Endothelial cell of umbilical vein (primary cell): ENCODE measurements at regions of chr2 and their contacts with region 1.

Region 1: DNA sequence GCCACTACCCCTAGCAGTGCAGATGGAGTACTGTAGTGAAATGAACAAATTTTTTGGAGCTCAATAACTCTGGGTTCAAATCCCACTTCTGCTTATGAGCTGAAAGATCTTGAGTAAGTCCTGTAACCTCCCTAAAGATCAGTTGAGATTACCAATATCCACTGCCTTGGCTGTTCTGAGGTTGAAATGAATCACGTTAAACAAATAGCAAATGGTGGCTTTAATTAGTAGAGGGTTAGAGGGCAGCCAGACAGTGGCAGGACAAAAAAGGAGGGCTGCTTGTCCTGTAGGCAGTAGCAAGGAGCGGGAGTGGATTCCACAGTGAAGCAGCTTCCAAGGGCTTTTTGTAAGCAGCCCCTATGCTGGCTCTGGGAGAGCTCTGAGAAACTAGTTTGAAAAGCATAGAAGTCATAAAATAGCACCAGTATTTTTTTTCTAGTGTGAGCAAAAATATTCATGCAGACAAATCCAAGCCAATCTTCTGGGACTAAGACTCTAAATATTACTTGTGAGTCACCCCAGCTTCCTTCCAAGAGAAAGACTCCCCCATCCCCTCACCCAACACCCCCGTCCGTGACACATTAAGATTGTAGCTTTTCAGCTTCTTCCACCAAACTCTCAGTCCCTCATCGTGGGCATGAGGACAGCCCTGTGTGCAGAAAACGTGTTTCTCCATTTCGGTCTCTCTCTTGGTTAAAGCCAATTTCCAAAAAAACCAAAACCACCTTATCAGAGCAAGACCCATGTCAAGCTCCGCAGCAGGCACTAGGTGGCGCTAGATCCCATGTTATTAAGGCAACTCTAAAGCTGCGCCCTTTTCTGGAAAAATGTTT is 123.5 kb upstream of the LGALSL start:
- DNase-seq: peak; percentile 86
- H3K4me3 ChIP-seq: peak overlapping the region; percentile 15 to 34 (median 20)
- H3K27ac ChIP-seq: no peak overlapping the region
- H3K4me1 ChIP-seq: peaks cover 14% of the 10 kb centered on the region
- H3K27me3 ChIP-seq: no peaks in the 10 kb centered on the region
- CTCF ChIP-seq: peak; percentile 83 to 87
- POLR2A ChIP-seq: no peak

Region 2: GRCh38 chr2:64052468-64053241 is 277.8 kb before region 1 on chr2:
- CTCF ChIA-PET with region 1: interaction called, 388 read pairs
- POLR2A ChIA-PET with region 1: interaction called, 4 read pairs
- dilution Hi-C with region 1: no loop called
- intact Hi-C with region 1: loop called (anchors 1 kb)
- DNase-seq: peak; percentile 94
- H3K4me3 ChIP-seq: peak overlapping the region in 1 of 3 experiments; percentile 20
- H3K27ac ChIP-seq: peak overlapping the region; percentile 96
- H3K4me1 ChIP-seq: peaks cover 28% of the 10 kb centered on the region
- H3K27me3 ChIP-seq: no peaks in the 10 kb centered on the region
- CTCF ChIP-seq: no peak
- POLR2A ChIP-seq: no peak

Region 3: GRCh38 chr2:64267699-64268098 is 62.8 kb before region 1 on chr2:
- CTCF ChIA-PET with region 1: interaction called, 10 read pairs
- POLR2A ChIA-PET with region 1: no interaction called
- dilution Hi-C with region 1: no loop called
- intact Hi-C with region 1: loop called (anchors 2 kb)
- DNase-seq: peak; percentile 73
- H3K4me3 ChIP-seq: no peak overlapping the region
- H3K27ac ChIP-seq: peak overlapping the region; percentile 96
- H3K4me1 ChIP-seq: peaks cover 47% of the 10 kb centered on the region
- H3K27me3 ChIP-seq: no peaks in the 10 kb centered on the region
- CTCF ChIP-seq: no peak
- POLR2A ChIP-seq: no peak

Region 4: GRCh38 chr2:64404002-64404731 is 73.7 kb after region 1 on chr2:
- CTCF ChIA-PET with region 1: interaction called, 23 read pairs
- POLR2A ChIA-PET with region 1: no interaction called
- dilution Hi-C with region 1: no loop called
- intact Hi-C with region 1: loop called (anchors 1 kb)
- DNase-seq: peak; percentile 99
- H3K4me3 ChIP-seq: peak overlapping the region in 1 of 3 experiments; percentile 26
- H3K27ac ChIP-seq: peak overlapping the region; percentile 72
- H3K4me1 ChIP-seq: peaks cover 35% of the 10 kb centered on the region
- H3K27me3 ChIP-seq: peaks cover 7 to 17% of the 10 kb centered on the region in 2 experiments
- CTCF ChIP-seq: no peak
- POLR2A ChIP-seq: no peak

Region 5: GRCh38 chr2:64488050-64488974 is 157.8 kb after region 1 on chr2:
- CTCF ChIA-PET with region 1: interaction called, 185 read pairs
- POLR2A ChIA-PET with region 1: interaction called, 3 read pairs
- dilution Hi-C with region 1: no loop called
- intact Hi-C with region 1: loop called (anchors 1 kb)
- DNase-seq: peak; percentile 55
- H3K4me3 ChIP-seq: no peak overlapping the region
- H3K27ac ChIP-seq: no peak overlapping the region
- H3K4me1 ChIP-seq: peaks cover 31% of the 10 kb centered on the region
- H3K27me3 ChIP-seq: peaks cover 10 to 19% of the 10 kb centered on the region in 2 experiments
- CTCF ChIP-seq: peak; percentile 87 to 92
- POLR2A ChIP-seq: no peak

Region 6: DNA sequence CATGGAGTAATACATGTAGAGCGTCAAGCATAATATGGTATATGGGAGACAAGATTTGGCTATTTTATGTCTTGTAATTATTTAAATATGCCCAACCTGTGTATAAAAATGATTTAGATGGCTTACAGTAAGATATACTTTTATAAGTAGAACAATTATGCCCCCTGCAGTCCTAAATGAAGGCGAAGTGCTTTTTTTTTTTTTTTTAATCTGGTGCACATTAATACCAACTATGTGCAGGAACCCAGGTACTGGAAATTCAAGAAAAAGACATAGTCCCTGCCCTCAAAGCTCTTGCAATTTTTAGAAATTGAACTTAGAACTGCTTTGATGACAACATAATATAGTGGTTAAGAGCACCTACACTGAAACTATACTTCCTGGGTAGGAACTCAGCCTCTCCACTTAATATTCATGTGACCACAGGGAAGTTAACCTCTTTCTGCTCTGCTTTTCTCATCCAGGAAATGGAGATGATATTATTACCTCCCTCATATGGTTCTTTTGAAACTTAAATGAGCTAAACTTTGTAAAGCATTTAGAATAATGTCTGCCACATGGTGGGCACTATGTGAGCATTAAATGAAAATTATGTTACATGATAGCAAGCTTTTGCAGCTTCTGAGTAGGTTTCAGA is 231.8 kb after region 1 on chr2:
- CTCF ChIA-PET with region 1: interaction called, 49 read pairs
- POLR2A ChIA-PET with region 1: no interaction called
- dilution Hi-C with region 1: no loop called
- intact Hi-C with region 1: loop called (anchors 1 kb)
- DNase-seq: peak; percentile 57
- H3K4me3 ChIP-seq: no peak overlapping the region
- H3K27ac ChIP-seq: no peak overlapping the region
- H3K4me1 ChIP-seq: no peaks in the 10 kb centered on the region
- H3K27me3 ChIP-seq: no peaks in the 10 kb centered on the region
- CTCF ChIP-seq: peak; percentile 7 to 10
- POLR2A ChIP-seq: no peak

Region 7: GRCh38 chr2:64873472-64873924 is 543.0 kb after region 1 on chr2:
- CTCF ChIA-PET with region 1: interaction called, 6 read pairs
- POLR2A ChIA-PET with region 1: no interaction called
- dilution Hi-C with region 1: no loop called
- intact Hi-C with region 1: loop called (anchors 2 kb)
- DNase-seq: peak; percentile 63
- H3K4me3 ChIP-seq: no peak overlapping the region
- H3K27ac ChIP-seq: no peak overlapping the region
- H3K4me1 ChIP-seq: peaks cover 10% of the 10 kb centered on the region
- H3K27me3 ChIP-seq: no peaks in the 10 kb centered on the region
- CTCF ChIP-seq: peak; percentile 95 to 96
- POLR2A ChIP-seq: no peak